Sigmoid colon (tissue), 7 donors: ENCODE measurements at regions of chr15 and their contacts with region 1.

Region 1: DNA sequence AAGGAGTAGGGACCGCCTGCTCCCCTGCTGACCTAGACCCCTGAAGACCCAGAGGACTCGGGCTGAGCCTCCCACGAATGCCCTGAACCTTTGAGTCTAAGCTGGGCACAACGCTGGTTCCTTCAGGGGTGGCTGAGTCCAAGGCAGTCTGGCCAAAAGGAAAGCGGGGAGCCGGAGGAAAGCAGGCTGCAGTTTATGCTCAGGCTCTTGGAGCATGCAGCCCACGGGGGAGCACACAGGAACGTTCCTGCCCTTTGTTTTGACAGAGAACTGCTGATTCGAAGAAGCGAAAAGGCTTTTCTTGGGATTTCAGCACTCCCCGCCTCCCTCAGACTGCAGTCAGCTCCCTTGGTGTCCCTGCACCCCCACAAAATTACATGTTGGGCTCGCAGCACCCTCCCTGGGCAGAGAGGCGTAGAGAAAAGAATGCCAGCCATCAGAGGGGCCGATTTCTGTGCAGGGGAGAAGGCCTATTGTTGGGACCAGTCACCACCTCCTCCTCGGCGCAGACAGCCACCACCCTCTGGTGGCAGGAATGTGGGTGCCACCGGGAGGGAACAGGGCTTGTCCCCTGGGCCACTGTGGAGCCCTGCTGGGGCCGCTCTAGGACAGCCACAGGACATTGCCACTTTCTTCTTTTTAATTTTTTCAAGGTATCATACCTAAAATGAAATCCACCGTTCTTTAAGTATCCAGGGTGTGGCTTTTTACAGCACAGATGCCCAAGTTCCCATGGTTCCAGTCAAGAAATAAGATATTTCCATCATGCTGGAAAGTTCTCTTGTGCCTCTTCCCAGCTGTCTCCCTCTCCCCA is 72.2 kb downstream of the SMAD6 start:
- DNase-seq: peak; percentile 92
- H3K4me3 ChIP-seq: no peak overlapping the region
- H3K27ac ChIP-seq: peak overlapping the region; percentile 68 to 79 (median 72)
- H3K4me1 ChIP-seq: peaks cover 0 to 38% (median 34%) of the 10 kb centered on the region in 4 donors
- H3K27me3 ChIP-seq: no peaks in the 10 kb centered on the region
- CTCF ChIP-seq: peak; percentile 94 to 98 (median 97)
- EP300 ChIP-seq: no peak
- POLR2A ChIP-seq: no peak

Region 2: GRCh38 chr15:66588537-66588936 is 185.7 kb before region 1 on chr15:
- intact Hi-C with region 1: no loop called
- DNase-seq: no peak
- H3K4me3 ChIP-seq: no peak overlapping the region
- H3K27ac ChIP-seq: no peak overlapping the region
- H3K4me1 ChIP-seq: no peaks in the 10 kb centered on the region
- H3K27me3 ChIP-seq: peaks cover 0 to 12% (median 0%) of the 10 kb centered on the region in 3 donors
- CTCF ChIP-seq: no peak
- EP300 ChIP-seq: no peak
- POLR2A ChIP-seq: no peak

Region 3: DNA sequence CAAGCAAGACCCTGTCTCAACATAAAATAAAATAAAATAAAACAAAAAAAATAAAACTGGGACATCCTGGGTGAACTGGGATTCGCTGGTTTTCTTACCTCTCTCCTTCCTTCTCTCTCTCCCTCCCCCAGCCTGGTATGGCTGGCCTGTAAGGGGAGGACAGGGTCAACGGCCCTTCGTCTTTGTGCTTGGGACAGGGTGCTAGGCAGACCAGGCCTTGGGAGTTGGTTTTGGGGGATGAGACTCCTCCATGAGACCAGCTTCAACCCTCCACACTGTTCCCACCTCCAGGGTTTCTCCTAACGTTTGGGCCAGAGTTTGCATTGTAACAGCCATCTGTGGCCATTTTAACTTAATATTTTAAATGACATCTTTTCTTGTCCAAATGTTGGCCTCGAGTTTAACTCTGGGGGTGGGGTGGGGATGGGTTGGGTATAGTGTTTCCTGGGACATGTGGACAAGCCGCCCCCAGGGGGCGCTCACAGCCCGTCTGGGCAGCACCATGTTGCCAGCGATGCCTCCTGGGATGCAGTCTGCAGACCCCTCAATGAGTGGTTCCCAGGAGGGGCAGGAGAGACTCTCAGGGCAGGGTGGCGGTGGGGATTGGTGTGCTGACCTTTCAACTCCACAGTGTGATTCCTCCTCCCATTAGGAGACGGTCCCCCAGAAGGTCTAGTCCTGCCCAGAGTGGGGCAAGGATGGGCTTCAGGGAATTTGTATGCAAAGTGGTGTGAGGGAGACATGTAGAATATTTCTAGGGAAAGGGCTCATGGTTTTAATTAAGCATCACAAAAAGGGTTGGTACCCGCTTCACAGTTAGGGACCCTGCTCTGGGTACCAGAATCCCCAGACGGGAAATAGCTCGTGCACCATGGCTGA is 170.7 kb before region 1 on chr15:
- intact Hi-C with region 1: loop called (anchors 1 kb)
- DNase-seq: peak; percentile 73
- H3K4me3 ChIP-seq: no peak overlapping the region
- H3K27ac ChIP-seq: no peak overlapping the region
- H3K4me1 ChIP-seq: no peaks in the 10 kb centered on the region
- H3K27me3 ChIP-seq: no peaks in the 10 kb centered on the region
- CTCF ChIP-seq: peak; percentile 59 to 80 (median 64)
- EP300 ChIP-seq: no peak
- POLR2A ChIP-seq: no peak

Region 4: GRCh38 chr15:66619151-66619903 is 154.9 kb before region 1 on chr15:
- intact Hi-C with region 1: loop called (anchors 1 kb)
- DNase-seq: peak; percentile 86
- H3K4me3 ChIP-seq: no peak overlapping the region
- H3K27ac ChIP-seq: peak overlapping the region in 1 of 4 donors; percentile 32
- H3K4me1 ChIP-seq: peaks cover 0 to 41% (median 37%) of the 10 kb centered on the region in 4 donors
- H3K27me3 ChIP-seq: peaks cover 0 to 21% (median 17%) of the 10 kb centered on the region in 3 donors
- CTCF ChIP-seq: peak; percentile 60 to 88 (median 74)
- EP300 ChIP-seq: no peak
- POLR2A ChIP-seq: no peak